WTC11 (cell line): ENCODE measurements at regions of chr20 and their contacts with region 1.

Region 1: GRCh38 chr20:62576815-62577506 is 65.3 kb upstream of the SLCO4A1 start:
- DNase-seq: peak; percentile 46
- ATAC-seq: peak; percentile 57
- H3K4me3 Mint-ChIP-seq: no peak overlapping the region
- H3K27ac Mint-ChIP-seq: no peak overlapping the region
- H3K4me1 Mint-ChIP-seq: peaks cover 6% of the 10 kb centered on the region; the same call in 1 of the 2 replicates
- H3K27me3 Mint-ChIP-seq: peaks cover 2% of the 10 kb centered on the region
- CTCF ChIP-seq: no peak

Region 2: GRCh38 chr20:62227977-62228958 is 348.7 kb before region 1 on chr20:
- CTCF ChIA-PET with region 1: no interaction called
- POLR2A ChIA-PET with region 1: no interaction called
- DNase-seq: peak; percentile 59
- ATAC-seq: peak; percentile 95
- H3K4me3 Mint-ChIP-seq: no peak overlapping the region
- H3K27ac Mint-ChIP-seq: no peak overlapping the region
- H3K4me1 Mint-ChIP-seq: peaks cover 3% of the 10 kb centered on the region
- H3K27me3 Mint-ChIP-seq: peaks cover 4% of the 10 kb centered on the region; the same call in 1 of the 2 replicates
- CTCF ChIP-seq: no peak

Region 3: GRCh38 chr20:62461157-62461556 is 115.8 kb before region 1 on chr20:
- CTCF ChIA-PET with region 1: no interaction called
- POLR2A ChIA-PET with region 1: no interaction called
- DNase-seq: no peak
- ATAC-seq: no peak
- H3K4me3 Mint-ChIP-seq: no peak overlapping the region
- H3K27ac Mint-ChIP-seq: no peak overlapping the region
- H3K4me1 Mint-ChIP-seq: peaks cover 5% of the 10 kb centered on the region; the same call in 1 of the 2 replicates
- H3K27me3 Mint-ChIP-seq: no peaks in the 10 kb centered on the region
- CTCF ChIP-seq: no peak

Region 4: GRCh38 chr20:62536871-62537401 is 40.0 kb before region 1 on chr20:
- CTCF ChIA-PET with region 1: interaction called, 11 read pairs
- POLR2A ChIA-PET with region 1: no interaction called
- DNase-seq: no peak
- ATAC-seq: no peak
- H3K4me3 Mint-ChIP-seq: no peak overlapping the region
- H3K27ac Mint-ChIP-seq: no peak overlapping the region
- H3K4me1 Mint-ChIP-seq: no peaks in the 10 kb centered on the region
- H3K27me3 Mint-ChIP-seq: no peaks in the 10 kb centered on the region
- CTCF ChIP-seq: no peak

Region 5: GRCh38 chr20:62550087-62550632 is 26.8 kb before region 1 on chr20:
- CTCF ChIA-PET with region 1: interaction called, 17 read pairs
- POLR2A ChIA-PET with region 1: no interaction called
- DNase-seq: no peak
- ATAC-seq: peak; percentile 10
- H3K4me3 Mint-ChIP-seq: peak overlapping the region; percentile 62
- H3K27ac Mint-ChIP-seq: no peak overlapping the region
- H3K4me1 Mint-ChIP-seq: peaks cover 9% of the 10 kb centered on the region; the same call in 1 of the 2 replicates
- H3K27me3 Mint-ChIP-seq: peaks cover 20% of the 10 kb centered on the region
- CTCF ChIP-seq: no peak

Region 6: DNA sequence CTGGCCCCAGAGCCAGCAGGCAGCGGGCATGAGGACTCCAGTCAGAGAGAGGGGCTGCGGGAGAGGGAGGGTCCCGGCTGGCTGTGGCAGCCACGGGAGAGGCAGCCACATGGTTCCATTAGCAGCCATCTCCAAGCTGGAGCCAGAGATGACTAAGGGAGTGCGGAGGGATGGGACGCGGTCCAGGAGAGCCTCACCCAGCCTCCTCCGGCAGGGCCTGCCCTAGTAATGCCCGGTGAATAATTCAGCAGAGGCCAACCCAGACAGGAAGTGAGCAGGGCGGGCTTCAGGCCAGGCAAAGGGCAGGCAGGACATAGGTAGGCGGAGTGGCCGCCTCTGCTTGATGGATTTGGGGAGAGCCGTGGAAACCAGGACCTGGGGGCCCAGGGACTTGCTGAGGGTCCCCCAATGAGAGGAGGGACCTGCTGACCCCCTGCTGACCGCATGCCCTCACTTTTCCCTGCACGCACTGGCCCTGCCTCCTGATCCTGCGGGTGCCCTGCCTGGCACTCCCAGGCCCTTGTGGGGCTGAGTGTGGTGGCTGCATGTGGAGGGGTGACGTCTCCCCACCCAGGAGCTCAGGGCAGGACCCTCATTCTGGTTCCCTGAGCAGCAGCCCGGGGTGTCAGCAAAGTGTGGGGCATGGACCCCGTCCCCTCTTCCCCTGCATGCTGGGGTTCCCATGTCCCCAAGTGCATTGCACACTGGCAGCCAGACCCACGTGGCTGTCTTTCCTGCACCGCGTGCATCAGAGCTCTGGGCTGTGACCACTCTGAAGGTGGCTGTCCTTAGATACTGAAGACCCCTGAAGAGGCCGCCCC is 13.6 kb after region 1 on chr20:
- CTCF ChIA-PET with region 1: interaction called, 12 read pairs
- POLR2A ChIA-PET with region 1: interaction called, 3 read pairs
- DNase-seq: no peak
- ATAC-seq: no peak
- H3K4me3 Mint-ChIP-seq: no peak overlapping the region
- H3K27ac Mint-ChIP-seq: no peak overlapping the region
- H3K4me1 Mint-ChIP-seq: no peaks in the 10 kb centered on the region
- H3K27me3 Mint-ChIP-seq: no peaks in the 10 kb centered on the region; the same call in 1 of the 2 replicates
- CTCF ChIP-seq: no peak

Region 7: GRCh38 chr20:62636446-62636845 is 59.5 kb after region 1 on chr20:
- CTCF ChIA-PET with region 1: no interaction called
- POLR2A ChIA-PET with region 1: no interaction called
- DNase-seq: no peak
- ATAC-seq: no peak
- H3K4me3 Mint-ChIP-seq: no peak overlapping the region
- H3K27ac Mint-ChIP-seq: no peak overlapping the region
- H3K4me1 Mint-ChIP-seq: peaks cover 12% of the 10 kb centered on the region
- H3K27me3 Mint-ChIP-seq: peaks cover 25% of the 10 kb centered on the region
- CTCF ChIP-seq: no peak

Region 8: GRCh38 chr20:62652051-62652926 is 75.3 kb after region 1 on chr20:
- CTCF ChIA-PET with region 1: no interaction called
- POLR2A ChIA-PET with region 1: no interaction called
- DNase-seq: peak; percentile 50
- ATAC-seq: peak; percentile 39
- H3K4me3 Mint-ChIP-seq: no peak overlapping the region
- H3K27ac Mint-ChIP-seq: peak overlapping the region; percentile 82
- H3K4me1 Mint-ChIP-seq: peaks cover 18% of the 10 kb centered on the region
- H3K27me3 Mint-ChIP-seq: no peaks in the 10 kb centered on the region
- CTCF ChIP-seq: no peak